ENCODE measurements at regions of chr20 and their contacts with region 1.

Region 1: GRCh38 chr20:45771182-45771759 is 20.4 kb downstream of the WFDC3 start:
- DNase-seq: no peak
- H3K4me3 ChIP-seq: no peak overlapping the region
- H3K27ac ChIP-seq: peak overlapping the region; percentile 82
- H3K4me1 ChIP-seq: peaks cover 18% of the 10 kb centered on the region
- H3K27me3 ChIP-seq: no peaks in the 10 kb centered on the region
- CTCF ChIP-seq: peak; percentile 90 to 98 (median 98)
- POLR2A ChIP-seq: no peak

Region 2: DNA sequence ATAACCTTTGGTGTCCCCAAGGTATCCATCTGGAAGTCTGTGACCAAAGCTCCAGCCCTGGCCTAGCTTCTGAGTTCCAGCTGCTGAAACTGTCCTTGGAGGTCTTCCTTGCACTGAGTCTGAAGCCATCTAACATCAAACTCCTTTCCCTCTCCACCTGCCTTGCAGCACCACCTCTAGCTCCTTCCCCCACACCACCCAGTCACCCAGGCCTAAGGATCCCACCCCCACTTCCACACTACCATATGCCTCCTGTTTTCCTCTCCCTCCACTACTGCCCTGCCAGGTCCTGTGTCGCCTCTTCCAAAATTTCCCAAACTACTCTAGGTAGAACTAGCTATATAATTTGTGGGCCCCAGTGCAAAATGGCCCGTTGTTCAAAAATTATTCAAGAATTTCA is 452.3 kb before region 1 on chr20:
- intact Hi-C with region 1: loop called (anchors 5 kb)
- DNase-seq: no peak
- H3K4me3 ChIP-seq: no peak overlapping the region
- H3K27ac ChIP-seq: no peak overlapping the region
- H3K4me1 ChIP-seq: peaks cover 8% of the 10 kb centered on the region
- H3K27me3 ChIP-seq: no peaks in the 10 kb centered on the region
- CTCF ChIP-seq: no peak
- POLR2A ChIP-seq: no peak

Region 3: GRCh38 chr20:45362804-45363610 is 408.3 kb before region 1 on chr20 and contains the start of gene SYS1:
- intact Hi-C with region 1: loop called (anchors 10 kb)
- DNase-seq: peak in 1 of 2 donors; percentile 99
- H3K4me3 ChIP-seq: peak within 1 kb of the TSS; percentile 68 to 70
- H3K27ac ChIP-seq: peak within 1 kb of the TSS; percentile 89
- H3K4me1 ChIP-seq: peaks cover 47% of the 10 kb centered on the region
- H3K27me3 ChIP-seq: no peaks in the 10 kb centered on the region
- CTCF ChIP-seq: peak; percentile 85 to 95 (median 86)
- POLR2A ChIP-seq: peak in 1 of 2 donors; percentile 70
- total RNA-seq, gene SYS1: 44.9 TPM

Region 4: GRCh38 chr20:45543739-45544138 is 227.5 kb before region 1 on chr20:
- intact Hi-C with region 1: loop called (anchors 5 kb)
- DNase-seq: peak in 1 of 2 donors; percentile 49
- H3K4me3 ChIP-seq: no peak overlapping the region
- H3K27ac ChIP-seq: no peak overlapping the region
- H3K4me1 ChIP-seq: no peaks in the 10 kb centered on the region
- H3K27me3 ChIP-seq: no peaks in the 10 kb centered on the region
- CTCF ChIP-seq: no peak
- POLR2A ChIP-seq: no peak

Measured in vagina (tissue), 2 donors.